OCI-LY7 (cell line): ENCODE measurements at regions of chr12 and their contacts with region 1.

Region 1: DNA sequence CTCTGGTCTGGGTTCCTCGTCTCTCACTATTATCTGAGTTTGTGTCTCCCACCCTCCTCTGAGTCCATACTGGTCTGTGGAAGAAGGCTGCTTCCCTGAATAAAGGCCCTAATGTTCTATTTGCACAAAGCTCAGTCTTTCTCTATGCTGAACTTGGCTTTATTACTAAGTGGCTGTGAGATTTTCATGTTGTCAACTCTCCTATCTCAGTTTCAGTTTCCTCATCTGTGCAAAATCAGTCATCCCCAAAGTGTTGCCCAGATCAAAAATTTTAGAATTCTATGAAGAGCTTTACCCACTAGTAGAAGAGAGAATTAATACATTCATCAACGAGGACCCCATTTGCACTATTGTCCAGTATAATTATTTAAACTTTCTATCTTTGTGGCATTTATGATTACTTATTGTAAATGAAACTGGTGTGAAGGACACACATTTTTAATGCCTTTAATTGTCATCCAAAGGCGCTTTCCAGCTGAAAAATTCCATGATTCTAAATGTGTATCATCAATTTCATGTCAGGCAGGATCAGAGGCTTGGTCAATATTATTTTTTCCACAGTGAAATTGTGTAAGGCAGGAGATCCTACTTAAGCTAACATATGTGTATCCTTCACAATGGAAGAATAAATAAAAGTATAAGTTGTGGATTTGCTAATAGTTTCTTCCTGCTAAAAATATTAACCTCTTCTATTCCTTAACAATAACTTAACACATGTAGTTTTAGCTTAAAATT is 79.1 kb upstream of the EEA1 start:
- DNase-seq: no peak
- H3K4me3 ChIP-seq: no peak overlapping the region
- H3K27ac ChIP-seq: no peak overlapping the region
- H3K4me1 ChIP-seq: peaks cover 6% of the 10 kb centered on the region
- CTCF ChIP-seq: no peak

Region 2: DNA sequence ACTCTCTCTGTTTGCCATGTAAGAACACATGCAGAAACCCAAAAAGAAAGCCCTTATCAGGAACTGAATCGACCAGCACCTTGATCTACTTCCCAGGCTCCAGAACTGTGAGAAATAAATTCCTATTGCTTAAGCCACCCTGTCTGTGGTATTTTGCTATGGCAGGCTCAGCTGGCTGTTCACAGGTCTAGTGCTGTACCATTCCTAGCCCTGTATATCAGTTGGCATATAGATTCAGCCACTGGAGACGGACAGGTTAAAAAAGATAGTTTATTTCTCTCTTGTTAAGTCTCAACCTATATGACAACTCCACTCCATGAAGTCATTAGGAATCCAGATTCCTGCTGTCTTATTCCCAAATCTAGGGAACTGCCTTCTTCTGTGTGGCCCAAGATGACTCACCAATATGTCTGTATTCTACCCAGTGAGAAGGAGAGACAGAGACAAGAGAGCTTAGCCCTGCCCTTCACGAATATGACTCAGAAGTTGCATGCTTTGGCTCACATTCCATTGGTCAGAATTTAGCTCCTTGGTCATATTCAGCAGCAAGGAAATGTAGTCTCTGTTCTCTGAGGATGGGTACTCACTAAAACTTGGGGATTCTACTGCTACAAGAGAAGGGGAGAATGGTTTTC is 248.5 kb before region 1 on chr12:
- CTCF ChIA-PET with region 1: no interaction called
- POLR2A ChIA-PET with region 1: no interaction called
- intact Hi-C with region 1: no loop called
- DNase-seq: no peak
- H3K4me3 ChIP-seq: no peak overlapping the region
- H3K27ac ChIP-seq: no peak overlapping the region
- H3K4me1 ChIP-seq: no peaks in the 10 kb centered on the region
- CTCF ChIP-seq: no peak

Region 3: GRCh38 chr12:92995258-92995903 is 12.8 kb before region 1 on chr12:
- CTCF ChIA-PET with region 1: no interaction called
- POLR2A ChIA-PET with region 1: interaction called, 29 read pairs
- intact Hi-C with region 1: no loop called
- DNase-seq: peak; percentile 90
- H3K4me3 ChIP-seq: peak overlapping the region; percentile 13
- H3K27ac ChIP-seq: peak overlapping the region; percentile 73
- H3K4me1 ChIP-seq: peaks cover 34% of the 10 kb centered on the region
- CTCF ChIP-seq: no peak